B cell (primary cell): ENCODE measurements at regions of chr4 and their contacts with region 1.

Region 1: DNA sequence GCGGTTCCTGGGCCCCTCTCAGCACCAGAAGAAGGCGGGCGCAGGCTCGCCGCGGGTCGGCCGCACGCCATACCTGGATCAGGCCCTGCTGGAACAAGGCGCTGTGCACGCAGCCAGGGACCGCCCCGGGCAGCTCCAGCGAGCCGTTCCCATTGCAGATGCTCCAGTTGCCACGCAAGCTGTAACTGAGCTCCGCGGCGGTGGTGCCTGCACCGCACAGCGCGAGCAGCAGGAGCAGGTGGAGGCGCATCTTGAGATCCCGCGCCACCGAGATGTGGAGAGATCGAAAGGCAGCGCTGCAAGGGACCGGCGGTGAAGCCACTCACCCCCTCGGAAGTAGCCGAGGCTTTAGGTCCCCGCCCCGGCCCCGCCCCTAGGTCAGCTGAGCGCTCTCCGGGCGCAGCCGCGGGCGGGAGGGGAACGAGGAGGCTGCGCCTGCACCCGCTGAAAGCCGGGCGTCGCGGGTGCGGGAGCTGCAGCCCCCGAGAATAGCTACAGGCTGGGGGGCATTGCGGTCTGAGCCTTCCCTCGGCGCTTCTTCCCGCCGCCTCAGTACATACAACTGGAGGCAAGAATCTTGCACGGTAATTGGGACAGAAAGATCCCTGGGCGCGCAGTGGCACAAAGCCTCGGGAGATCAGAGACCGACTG is at the start of gene MANBA:
- DNase-seq: peak; percentile 93
- ATAC-seq: peak; percentile 75
- H3K4me3 ChIP-seq: peak within 1 kb of the TSS; percentile 69 to 99 (median 87)
- H3K4me3 Mint-ChIP-seq: peak within 1 kb of the TSS; percentile 96
- H3K27ac ChIP-seq: peak within 1 kb of the TSS; percentile 98
- H3K27ac Mint-ChIP-seq: peak within 1 kb of the TSS; percentile 97
- H3K4me1 ChIP-seq: peaks cover 29 to 35% of the 10 kb centered on the region in 2 donors
- H3K4me1 Mint-ChIP-seq: peaks cover 51% of the 10 kb centered on the region
- H3K27me3 ChIP-seq: no peaks in the 10 kb centered on the region
- H3K27me3 Mint-ChIP-seq: no peaks in the 10 kb centered on the region
- CTCF ChIP-seq: no peak
- total RNA-seq, gene MANBA: 119 and 132 TPM in 2 replicates

Region 2: GRCh38 chr4:102736636-102737549 is 23.9 kb before region 1 on chr4:
- CTCF ChIA-PET with region 1: no interaction called
- POLR2A ChIA-PET with region 1: no interaction called
- intact Hi-C with region 1: loop called (anchors 2 kb)
- DNase-seq: no peak
- ATAC-seq: no peak
- H3K4me3 ChIP-seq: no peak overlapping the region
- H3K4me3 Mint-ChIP-seq: no peak overlapping the region
- H3K27ac ChIP-seq: no peak overlapping the region
- H3K27ac Mint-ChIP-seq: no peak overlapping the region
- H3K4me1 ChIP-seq: peaks cover 10 to 15% of the 10 kb centered on the region in 2 donors
- H3K4me1 Mint-ChIP-seq: peaks cover 52% of the 10 kb centered on the region
- H3K27me3 ChIP-seq: no peaks in the 10 kb centered on the region
- H3K27me3 Mint-ChIP-seq: no peaks in the 10 kb centered on the region
- CTCF ChIP-seq: no peak

Region 3: GRCh38 chr4:102809190-102809589 is 48.4 kb after region 1 on chr4:
- CTCF ChIA-PET with region 1: interaction called, 3 read pairs
- POLR2A ChIA-PET with region 1: no interaction called
- intact Hi-C with region 1: loop called (anchors 5 kb)
- DNase-seq: peak; percentile 45
- ATAC-seq: peak; percentile 36
- H3K4me3 ChIP-seq: no peak overlapping the region
- H3K4me3 Mint-ChIP-seq: no peak overlapping the region
- H3K27ac ChIP-seq: peak overlapping the region; percentile 9 to 44
- H3K27ac Mint-ChIP-seq: peak overlapping the region; percentile 18
- H3K4me1 ChIP-seq: peaks cover 22 to 24% of the 10 kb centered on the region in 2 donors
- H3K4me1 Mint-ChIP-seq: peaks cover 43% of the 10 kb centered on the region
- H3K27me3 ChIP-seq: no peaks in the 10 kb centered on the region
- H3K27me3 Mint-ChIP-seq: no peaks in the 10 kb centered on the region
- CTCF ChIP-seq: no peak

Region 4: GRCh38 chr4:102868781-102869568 is 108.2 kb after region 1 on chr4 and contains the start of gene CISD2:
- CTCF ChIA-PET with region 1: interaction called, 3 read pairs
- POLR2A ChIA-PET with region 1: interaction called, 15 read pairs
- intact Hi-C with region 1: loop called (anchors 1 kb)
- DNase-seq: peak; percentile 95
- ATAC-seq: peak; percentile 87
- H3K4me3 ChIP-seq: peak within 1 kb of the TSS; percentile 75 to 89 (median 84)
- H3K4me3 Mint-ChIP-seq: peak within 1 kb of the TSS; percentile 93
- H3K27ac ChIP-seq: peak within 1 kb of the TSS; percentile 97
- H3K27ac Mint-ChIP-seq: peak within 1 kb of the TSS; percentile 97
- H3K4me1 ChIP-seq: peaks cover 22 to 23% of the 10 kb centered on the region in 2 donors
- H3K4me1 Mint-ChIP-seq: peaks cover 52% of the 10 kb centered on the region
- H3K27me3 ChIP-seq: no peaks in the 10 kb centered on the region
- H3K27me3 Mint-ChIP-seq: no peaks in the 10 kb centered on the region
- CTCF ChIP-seq: no peak
- total RNA-seq, gene CISD2: 15.1 and 16.0 TPM in 2 replicates

Region 5: GRCh38 chr4:103075901-103076739 is 315.4 kb after region 1 on chr4:
- CTCF ChIA-PET with region 1: interaction called, 3 read pairs
- POLR2A ChIA-PET with region 1: interaction called, 4 read pairs
- intact Hi-C with region 1: loop called (anchors 2 kb)
- DNase-seq: peak; percentile 78
- ATAC-seq: peak; percentile 55
- H3K4me3 ChIP-seq: peak overlapping the region; percentile 65 to 83 (median 80)
- H3K4me3 Mint-ChIP-seq: peak overlapping the region; percentile 82
- H3K27ac ChIP-seq: peak overlapping the region; percentile 92
- H3K27ac Mint-ChIP-seq: peak overlapping the region; percentile 89
- H3K4me1 ChIP-seq: peaks cover 27 to 31% of the 10 kb centered on the region in 2 donors
- H3K4me1 Mint-ChIP-seq: peaks cover 35% of the 10 kb centered on the region
- H3K27me3 ChIP-seq: no peaks in the 10 kb centered on the region
- H3K27me3 Mint-ChIP-seq: no peaks in the 10 kb centered on the region
- CTCF ChIP-seq: peak; percentile 12